Activated CD4-positive, alpha-beta T cell treated with anti-CD3 and anti-CD28 coated beads, Interleukin-2, amount 10 ng/mL, durations not matched to agents 24 days and 14 days (primary cell): ENCODE measurements at regions of chr17 and their contacts with region 1.

Region 1: DNA sequence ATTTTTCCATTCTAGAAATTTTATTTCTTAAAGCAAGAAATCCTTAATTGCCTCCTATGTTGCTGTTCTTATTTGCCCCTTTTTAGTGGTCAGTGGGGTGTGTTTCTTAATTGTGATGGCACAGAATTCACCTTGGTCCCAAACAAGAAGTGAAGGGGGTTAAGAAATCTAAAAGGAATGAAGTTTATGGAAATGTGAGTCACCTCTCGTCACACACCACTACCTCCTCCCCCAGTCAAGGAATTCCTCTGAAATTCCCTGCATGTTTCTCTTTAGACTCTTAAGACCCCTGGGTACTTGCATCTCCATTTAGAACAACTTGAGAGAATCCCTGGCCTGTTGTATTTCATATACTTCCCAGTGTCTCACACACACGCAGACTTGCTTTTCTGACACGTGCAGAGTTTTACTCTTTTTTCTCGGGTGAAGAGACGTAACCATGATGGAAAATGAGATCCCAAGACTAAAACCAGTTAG is 247.4 kb downstream of the PRKCA start:
- DNase-seq: no peak
- H3K4me3 Mint-ChIP-seq: no peak overlapping the region
- H3K27ac Mint-ChIP-seq: no peak overlapping the region
- H3K4me1 Mint-ChIP-seq: peaks cover 45% of the 10 kb centered on the region
- H3K27me3 Mint-ChIP-seq: no peaks in the 10 kb centered on the region

Region 2: DNA sequence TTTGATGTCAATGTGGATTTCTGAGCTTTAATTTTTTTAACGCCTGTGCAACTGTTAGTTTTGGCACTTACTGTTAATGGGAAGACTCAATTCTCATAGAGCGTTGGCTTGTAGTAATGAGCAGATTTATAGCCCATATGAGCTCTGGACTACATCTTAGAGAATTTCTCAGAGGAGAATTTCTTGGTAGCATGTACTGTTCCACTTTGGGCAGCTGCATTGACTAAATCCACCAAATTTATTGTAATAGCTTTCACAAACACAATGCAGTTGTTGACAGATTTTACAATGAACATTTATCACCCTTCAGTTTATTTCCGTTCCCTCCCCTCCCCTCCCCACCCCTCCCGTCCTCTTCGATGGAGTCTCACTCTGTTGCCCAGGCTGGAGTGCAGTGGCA is 53.5 kb before region 1 on chr17:
- intact Hi-C with region 1: no loop called
- DNase-seq: no peak
- H3K4me3 Mint-ChIP-seq: no peak overlapping the region
- H3K27ac Mint-ChIP-seq: no peak overlapping the region
- H3K4me1 Mint-ChIP-seq: peaks cover 45% of the 10 kb centered on the region
- H3K27me3 Mint-ChIP-seq: no peaks in the 10 kb centered on the region

Region 3: DNA sequence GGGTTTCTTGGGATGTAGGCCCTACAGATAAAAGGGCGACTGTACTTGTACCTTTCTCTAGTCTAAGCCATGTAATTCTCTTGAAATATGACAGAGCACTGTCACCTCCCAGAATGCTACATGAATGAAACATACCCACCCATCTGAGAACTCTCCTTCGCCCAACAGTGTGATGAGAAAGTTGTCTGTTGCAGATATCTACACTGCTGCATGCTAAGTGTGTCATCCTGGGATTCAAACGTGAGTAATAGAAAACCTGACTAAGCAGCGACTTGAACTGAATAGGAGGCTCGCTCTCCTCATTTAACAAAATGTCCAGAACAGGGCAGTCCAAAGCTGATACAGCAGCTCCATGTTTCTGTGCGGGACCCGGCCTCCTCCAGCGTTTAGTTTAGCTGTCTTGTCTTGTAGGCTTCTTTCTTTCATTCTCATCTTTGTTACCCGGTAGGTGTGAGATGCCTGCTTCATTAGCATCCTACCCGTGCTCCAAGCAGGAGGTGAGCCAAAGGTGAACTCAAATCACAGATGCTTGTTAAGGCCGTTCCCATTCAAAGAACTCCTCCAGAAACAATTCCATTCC is 35.5 kb before region 1 on chr17:
- intact Hi-C with region 1: loop called (anchors 1 kb)
- DNase-seq: no peak
- H3K4me3 Mint-ChIP-seq: no peak overlapping the region
- H3K27ac Mint-ChIP-seq: peak overlapping the region; percentile 42
- H3K4me1 Mint-ChIP-seq: peaks cover 68% of the 10 kb centered on the region
- H3K27me3 Mint-ChIP-seq: no peaks in the 10 kb centered on the region